Activated naive CD4-positive, alpha-beta T cell treated with anti-CD3 and anti-CD28 coated beads for 36 hours (primary cell): ENCODE measurements at regions of chr2 and their contacts with region 1.

Region 1: GRCh38 chr2:63588385-63589147 is at the starts of genes MDH1 and WDPCP:
- DNase-seq: peak; percentile 95
- H3K4me3 Mint-ChIP-seq: peak within 1 kb of the TSS; percentile 99
- H3K27ac Mint-ChIP-seq: peak within 1 kb of the TSS; percentile 94
- H3K4me1 Mint-ChIP-seq: peaks cover 31% of the 10 kb centered on the region
- H3K27me3 Mint-ChIP-seq: no peaks in the 10 kb centered on the region
- total RNA-seq, gene MDH1: 269 to 275 TPM
- total RNA-seq, gene WDPCP: 5.6 to 5.7 TPM

Region 2: DNA sequence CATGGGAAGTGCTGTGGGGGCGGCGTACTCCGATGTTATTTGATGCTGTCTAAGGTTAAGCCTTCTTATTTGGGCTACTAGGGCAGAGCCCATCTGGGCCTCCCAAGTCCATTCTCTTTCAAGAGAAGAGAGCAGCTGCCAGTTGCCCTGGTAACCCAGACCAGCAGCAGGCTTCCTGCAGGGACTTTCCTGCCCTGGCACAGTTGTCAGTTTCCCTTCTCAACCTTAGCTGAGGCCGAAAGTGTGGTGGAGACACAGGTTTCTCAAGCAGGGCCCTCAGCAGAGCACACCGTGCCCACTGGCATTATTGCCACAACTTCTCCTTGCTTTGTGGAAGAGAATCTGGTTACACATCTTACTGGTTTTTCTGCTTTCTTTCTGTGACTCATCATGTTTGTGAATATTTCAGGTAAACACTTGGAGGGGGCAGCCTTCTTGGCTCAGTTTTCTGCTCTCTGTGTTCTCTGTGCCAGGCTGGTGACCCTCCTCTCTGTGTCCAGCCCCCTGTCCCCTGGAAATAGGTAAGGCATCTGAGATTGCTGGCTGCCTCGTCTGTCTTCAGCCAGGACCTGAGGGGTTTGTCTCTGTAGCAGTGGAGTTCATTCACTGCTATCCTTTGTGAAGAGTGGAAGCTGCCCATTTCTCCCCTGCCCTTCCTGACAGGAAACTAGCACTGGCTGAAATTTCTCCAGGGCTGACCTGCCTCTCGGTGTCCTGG is 1281.7 kb before region 1 on chr2:
- CTCF ChIA-PET with region 1: no interaction called
- intact Hi-C with region 1: loop called (anchors 10 kb)
- DNase-seq: peak; percentile 73
- H3K4me3 Mint-ChIP-seq: no peak overlapping the region
- H3K27ac Mint-ChIP-seq: peak overlapping the region; percentile 90
- H3K4me1 Mint-ChIP-seq: peaks cover 74% of the 10 kb centered on the region
- H3K27me3 Mint-ChIP-seq: no peaks in the 10 kb centered on the region

Region 3: DNA sequence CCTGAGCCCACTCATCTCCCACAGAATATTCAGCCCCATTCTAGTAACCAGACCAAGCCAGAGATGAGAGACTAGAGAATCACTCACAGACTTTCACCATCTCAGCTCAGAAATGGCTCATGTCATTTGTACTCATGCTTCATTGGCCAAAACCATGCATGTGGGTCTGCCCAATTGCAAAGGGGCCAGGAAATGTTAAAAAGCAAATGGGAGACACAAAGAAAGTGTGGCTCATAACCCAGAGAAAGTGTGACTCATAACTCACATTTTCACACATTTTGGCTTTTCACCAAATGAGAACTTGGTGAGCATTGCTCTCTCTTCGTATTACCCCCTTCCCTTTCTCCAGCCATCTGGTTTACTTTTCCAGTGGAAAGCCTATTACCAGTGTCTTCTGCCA is 66.4 kb after region 1 on chr2:
- CTCF ChIA-PET with region 1: no interaction called
- intact Hi-C with region 1: loop called (anchors 1 kb)
- DNase-seq: peak; percentile 49
- H3K4me3 Mint-ChIP-seq: no peak overlapping the region
- H3K27ac Mint-ChIP-seq: no peak overlapping the region
- H3K4me1 Mint-ChIP-seq: peaks cover 1% of the 10 kb centered on the region
- H3K27me3 Mint-ChIP-seq: peaks cover 3% of the 10 kb centered on the region

Region 4: DNA sequence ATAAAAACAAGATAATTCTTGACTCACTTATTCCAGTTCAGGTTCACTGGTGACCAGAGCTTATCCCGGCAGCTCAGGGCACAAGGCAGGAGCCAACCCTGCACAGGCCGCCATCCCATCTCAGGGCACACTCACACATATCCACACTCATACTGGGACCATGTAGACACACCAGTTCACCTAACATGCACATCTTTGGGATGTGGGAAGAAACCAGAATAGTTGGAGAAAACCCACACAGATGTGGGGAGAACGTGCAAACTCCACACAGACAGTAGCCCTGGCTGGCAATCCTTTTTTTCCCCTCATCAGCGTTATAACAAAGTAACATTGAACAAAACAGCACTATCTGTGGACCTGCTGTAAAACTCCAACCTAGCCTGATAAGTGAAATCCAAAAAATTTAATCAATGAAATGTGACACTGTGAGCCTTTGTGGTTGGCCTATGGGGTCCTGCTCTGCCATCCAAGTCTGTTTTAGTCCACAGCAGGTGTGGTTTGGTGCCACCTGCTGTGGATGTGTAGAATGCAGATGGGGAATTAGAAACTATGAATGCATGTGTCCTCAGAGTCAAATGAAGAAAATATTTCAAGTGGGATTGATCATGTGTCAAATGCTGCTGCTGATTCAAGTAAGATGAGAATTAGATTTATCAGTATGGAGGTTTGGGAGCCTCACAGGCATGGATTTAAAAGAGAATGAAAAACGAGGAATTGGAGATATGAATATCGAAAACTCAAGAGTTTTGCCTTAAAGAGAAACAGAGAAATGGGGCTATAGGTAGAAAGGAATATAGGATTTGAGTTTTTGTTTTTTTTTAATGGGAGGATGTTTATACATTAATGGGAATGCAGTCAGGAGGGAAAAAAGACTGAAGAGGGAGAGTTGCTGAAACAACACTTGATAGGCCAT is 300.2 kb after region 1 on chr2:
- CTCF ChIA-PET with region 1: no interaction called
- intact Hi-C with region 1: loop called (anchors 2 kb)
- DNase-seq: peak; percentile 74
- H3K4me3 Mint-ChIP-seq: no peak overlapping the region
- H3K27ac Mint-ChIP-seq: peak overlapping the region; percentile 53
- H3K4me1 Mint-ChIP-seq: peaks cover 11% of the 10 kb centered on the region
- H3K27me3 Mint-ChIP-seq: no peaks in the 10 kb centered on the region

Region 5: GRCh38 chr2:64144057-64145013 is 555.8 kb after region 1 on chr2 and contains the start of gene PELI1:
- CTCF ChIA-PET with region 1: no interaction called
- intact Hi-C with region 1: loop called (anchors 1 kb)
- DNase-seq: peak; percentile 98
- H3K4me3 Mint-ChIP-seq: peak within 1 kb of the TSS; percentile 94
- H3K27ac Mint-ChIP-seq: peak within 1 kb of the TSS; percentile 94
- H3K4me1 Mint-ChIP-seq: peaks cover 31% of the 10 kb centered on the region
- H3K27me3 Mint-ChIP-seq: no peaks in the 10 kb centered on the region
- total RNA-seq, gene PELI1: 25.7 to 28.0 TPM